GM12878 (cell line): ENCODE measurements at regions of chr1 and their contacts with region 1.

Region 1: DNA sequence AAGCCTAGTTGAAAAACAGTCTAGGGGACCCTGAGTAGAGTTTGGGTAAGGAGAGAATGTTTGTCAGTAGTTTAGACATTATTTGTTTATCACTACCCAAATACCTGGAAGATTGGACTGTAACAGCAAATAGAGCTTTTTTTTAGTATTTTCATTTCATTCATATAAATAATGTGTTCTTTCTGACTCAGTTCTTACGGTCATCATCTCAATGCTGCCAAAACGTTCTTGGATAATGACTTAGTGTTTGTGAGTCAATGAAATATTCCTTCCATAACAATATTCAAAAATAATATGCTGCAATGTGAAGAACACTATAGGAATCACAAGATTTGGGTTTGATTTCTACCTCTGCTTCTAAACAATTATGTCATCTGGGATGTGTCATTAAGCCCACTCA is 400.0 kb upstream of the PKN2 start:
- DNase-seq: no peak
- ATAC-seq: no peak
- H3K4me3 ChIP-seq: no peak overlapping the region
- H3K27ac ChIP-seq: no peak overlapping the region
- H3K4me1 ChIP-seq: no peaks in the 10 kb centered on the region
- H3K27me3 ChIP-seq: no peaks in the 10 kb centered on the region
- CTCF ChIP-seq: no peak
- EP300 ChIP-seq: no peak
- POLR2A ChIP-seq: no peak
- RAD21 ChIP-seq: no peak

Region 2: DNA sequence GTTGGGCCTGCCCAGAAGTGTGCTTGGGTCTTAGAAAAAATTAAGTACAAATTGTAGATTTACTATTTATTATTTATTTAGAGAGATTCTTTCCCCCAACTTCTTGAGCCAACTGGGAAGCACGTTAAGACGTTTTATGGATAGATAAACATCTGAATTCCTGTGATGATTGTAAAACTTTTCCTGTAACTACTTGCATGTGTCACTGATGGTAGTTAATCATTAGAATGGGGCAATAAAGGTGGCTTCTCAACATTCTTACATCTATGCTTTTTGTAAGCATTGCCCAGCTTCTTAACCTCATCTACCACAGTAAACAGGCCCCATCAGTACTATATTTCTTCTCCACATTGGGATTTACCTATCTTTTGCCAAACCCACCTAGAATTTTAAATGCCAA is 395.6 kb before region 1 on chr1:
- CTCF ChIA-PET with region 1: no interaction called
- POLR2A ChIA-PET with region 1: no interaction called
- RAD21 ChIA-PET with region 1: no interaction called
- SMC1A ChIA-PET with region 1: no interaction called
- in situ Hi-C with region 1: no loop called
- intact Hi-C with region 1: no loop called
- DNase-seq: no peak
- ATAC-seq: no peak
- H3K4me3 ChIP-seq: no peak overlapping the region
- H3K27ac ChIP-seq: no peak overlapping the region
- H3K4me1 ChIP-seq: no peaks in the 10 kb centered on the region
- H3K27me3 ChIP-seq: no peaks in the 10 kb centered on the region
- CTCF ChIP-seq: no peak
- EP300 ChIP-seq: no peak
- POLR2A ChIP-seq: no peak
- RAD21 ChIP-seq: no peak

Region 3: GRCh38 chr1:88341447-88341846 is 57.4 kb after region 1 on chr1:
- CTCF ChIA-PET with region 1: no interaction called
- POLR2A ChIA-PET with region 1: no interaction called
- RAD21 ChIA-PET with region 1: no interaction called
- SMC1A ChIA-PET with region 1: no interaction called
- in situ Hi-C with region 1: no loop called
- intact Hi-C with region 1: loop called (anchors 10 kb)
- DNase-seq: no peak
- ATAC-seq: no peak
- H3K4me3 ChIP-seq: no peak overlapping the region
- H3K27ac ChIP-seq: no peak overlapping the region
- H3K4me1 ChIP-seq: no peaks in the 10 kb centered on the region
- H3K27me3 ChIP-seq: no peaks in the 10 kb centered on the region
- CTCF ChIP-seq: no peak
- EP300 ChIP-seq: no peak
- POLR2A ChIP-seq: no peak
- RAD21 ChIP-seq: no peak